Transverse colon (tissue), 4 donors: ENCODE measurements at regions of chr5 and their contacts with region 1.

Region 1: GRCh38 chr5:66306105-66306843 is 162.2 kb downstream of the SREK1 start:
- DNase-seq: peak; percentile 34
- H3K4me3 ChIP-seq: no peak overlapping the region
- H3K27ac ChIP-seq: no peak overlapping the region
- H3K4me1 ChIP-seq: no peaks in the 10 kb centered on the region
- H3K27me3 ChIP-seq: peaks cover 6% of the 10 kb centered on the region
- CTCF ChIP-seq: peak; percentile 64 to 78 (median 72)
- EP300 ChIP-seq: no peak
- POLR2A ChIP-seq: no peak

Region 2: DNA sequence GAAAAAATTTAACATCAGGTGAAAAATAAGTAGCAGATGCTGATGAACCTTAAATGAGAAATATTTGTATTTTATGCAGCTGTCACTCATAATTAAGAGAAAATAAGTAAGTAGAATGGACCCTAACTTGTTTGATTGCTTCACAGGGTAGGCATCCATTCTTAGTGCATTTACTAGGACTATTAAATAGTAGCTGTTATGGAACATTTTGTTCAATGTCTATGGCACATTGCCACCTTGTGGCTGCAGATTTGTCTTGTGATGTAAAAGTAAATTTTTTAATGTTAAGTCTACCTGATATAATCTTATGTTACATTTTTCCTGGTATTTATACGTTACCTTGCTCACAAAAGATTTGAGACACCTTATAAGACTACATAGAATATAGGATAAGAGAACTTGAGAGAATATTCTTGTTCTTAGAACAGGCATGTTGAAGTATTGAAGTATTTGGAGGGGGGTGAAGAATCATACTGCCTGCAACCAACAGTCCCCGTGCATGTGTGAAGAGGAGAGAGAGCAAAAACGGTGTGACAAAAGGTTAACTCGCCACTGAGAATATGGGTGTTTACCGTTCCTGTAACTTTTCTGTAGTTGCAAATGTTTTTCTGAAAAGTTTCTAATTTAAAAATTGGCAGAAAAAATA is 451.0 kb after region 1 on chr5:
- in situ Hi-C with region 1: loop called (anchors 5 to 10 kb)
- intact Hi-C with region 1: loop called (anchors 5 kb)
- DNase-seq: peak; percentile 39
- H3K4me3 ChIP-seq: no peak overlapping the region
- H3K27ac ChIP-seq: no peak overlapping the region
- H3K4me1 ChIP-seq: no peaks in the 10 kb centered on the region
- H3K27me3 ChIP-seq: peaks cover 4% of the 10 kb centered on the region
- CTCF ChIP-seq: peak; percentile 37 to 51 (median 43)
- EP300 ChIP-seq: no peak
- POLR2A ChIP-seq: no peak

Region 3: GRCh38 chr5:66769839-66770617 is 463.8 kb after region 1 on chr5:
- in situ Hi-C with region 1: loop called in 3 of 4 experiments (anchors 10 kb)
- intact Hi-C with region 1: no loop called
- DNase-seq: peak; percentile 8
- H3K4me3 ChIP-seq: no peak overlapping the region
- H3K27ac ChIP-seq: no peak overlapping the region
- H3K4me1 ChIP-seq: no peaks in the 10 kb centered on the region
- H3K27me3 ChIP-seq: no peaks in the 10 kb centered on the region
- CTCF ChIP-seq: no peak
- EP300 ChIP-seq: no peak
- POLR2A ChIP-seq: no peak

Region 4: DNA sequence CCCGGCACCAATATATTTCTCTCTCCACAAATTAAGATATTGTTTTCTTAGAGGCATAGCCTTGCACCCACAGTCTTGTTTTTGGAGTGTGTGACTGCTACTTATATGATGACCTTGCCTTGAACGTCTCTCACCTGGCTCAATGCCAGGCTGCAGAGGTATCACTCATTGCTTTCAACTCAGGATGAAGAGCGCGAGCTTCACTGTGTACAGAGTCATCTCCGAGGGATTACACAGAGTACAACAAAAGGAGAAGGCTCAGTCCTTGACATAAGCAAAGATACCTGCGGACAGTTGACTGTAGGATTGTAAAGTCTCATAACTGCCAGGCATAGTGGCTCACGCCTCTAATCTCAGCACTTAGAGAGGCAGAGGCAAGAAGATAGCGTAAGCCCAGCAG is 836.5 kb after region 1 on chr5:
- in situ Hi-C with region 1: no loop called
- intact Hi-C with region 1: loop called (anchors 5 kb)
- DNase-seq: no peak
- H3K4me3 ChIP-seq: no peak overlapping the region
- H3K27ac ChIP-seq: no peak overlapping the region
- H3K4me1 ChIP-seq: peaks cover 0 to 15% (median 3%) of the 10 kb centered on the region in 4 donors
- H3K27me3 ChIP-seq: no peaks in the 10 kb centered on the region
- CTCF ChIP-seq: no peak
- EP300 ChIP-seq: no peak
- POLR2A ChIP-seq: no peak

Region 5: DNA sequence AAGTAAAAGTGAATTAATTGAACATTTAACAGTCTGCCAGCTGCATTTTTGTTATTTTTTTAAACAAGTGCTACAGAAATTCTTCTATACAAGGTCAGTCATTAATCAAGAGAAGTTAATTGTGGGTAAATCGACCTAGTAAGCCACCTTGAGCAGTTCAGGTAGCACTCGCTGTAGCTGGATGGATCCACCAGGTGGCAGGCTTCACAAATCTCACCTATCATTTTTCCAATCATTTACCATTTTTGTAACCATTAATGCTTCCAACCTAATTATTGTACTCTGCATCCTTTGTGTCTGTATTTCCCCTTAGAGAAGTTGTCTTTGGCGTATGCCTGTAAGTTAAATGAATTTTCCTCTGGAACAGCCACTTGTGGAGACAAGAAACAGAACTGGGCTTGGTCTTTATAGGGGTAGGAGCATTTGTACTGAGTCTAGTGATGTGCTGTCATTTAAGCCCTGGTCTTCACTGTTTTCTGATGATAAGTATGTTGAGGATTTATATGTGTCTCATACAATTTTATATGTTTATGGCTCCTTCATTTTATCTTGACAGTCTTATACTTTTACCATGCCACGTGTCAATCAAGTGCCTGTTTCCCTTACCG is 850.8 kb after region 1 on chr5:
- in situ Hi-C with region 1: no loop called
- intact Hi-C with region 1: loop called (anchors 5 kb)
- DNase-seq: peak; percentile 45
- H3K4me3 ChIP-seq: no peak overlapping the region
- H3K27ac ChIP-seq: no peak overlapping the region
- H3K4me1 ChIP-seq: no peaks in the 10 kb centered on the region
- H3K27me3 ChIP-seq: no peaks in the 10 kb centered on the region
- CTCF ChIP-seq: peak; percentile 74 to 84 (median 81)
- EP300 ChIP-seq: no peak
- POLR2A ChIP-seq: no peak